Activated CD4-positive, alpha-beta T cell treated with anti-CD3 and anti-CD28 coated beads for 36 hours (primary cell): ENCODE measurements at regions of chr6 and their contacts with region 1.

Region 1: GRCh38 chr6:138115877-138116660 is 8.8 kb upstream of the PERP start:
- DNase-seq: peak; percentile 68
- ATAC-seq: peak; percentile 94
- H3K4me3 Mint-ChIP-seq: no peak overlapping the region
- H3K27ac Mint-ChIP-seq: no peak overlapping the region
- H3K4me1 Mint-ChIP-seq: peaks cover 6% of the 10 kb centered on the region
- H3K27me3 Mint-ChIP-seq: peaks cover 30% of the 10 kb centered on the region

Region 2: GRCh38 chr6:138001750-138002349 is 114.2 kb before region 1 on chr6:
- CTCF ChIA-PET with region 1: interaction called, 11 read pairs
- POLR2A ChIA-PET with region 1: no interaction called
- intact Hi-C with region 1: no loop called
- DNase-seq: peak; percentile 76
- ATAC-seq: peak; percentile 31
- H3K4me3 Mint-ChIP-seq: no peak overlapping the region
- H3K27ac Mint-ChIP-seq: no peak overlapping the region
- H3K4me1 Mint-ChIP-seq: peaks cover 20% of the 10 kb centered on the region
- H3K27me3 Mint-ChIP-seq: peaks cover 3% of the 10 kb centered on the region

Region 3: DNA sequence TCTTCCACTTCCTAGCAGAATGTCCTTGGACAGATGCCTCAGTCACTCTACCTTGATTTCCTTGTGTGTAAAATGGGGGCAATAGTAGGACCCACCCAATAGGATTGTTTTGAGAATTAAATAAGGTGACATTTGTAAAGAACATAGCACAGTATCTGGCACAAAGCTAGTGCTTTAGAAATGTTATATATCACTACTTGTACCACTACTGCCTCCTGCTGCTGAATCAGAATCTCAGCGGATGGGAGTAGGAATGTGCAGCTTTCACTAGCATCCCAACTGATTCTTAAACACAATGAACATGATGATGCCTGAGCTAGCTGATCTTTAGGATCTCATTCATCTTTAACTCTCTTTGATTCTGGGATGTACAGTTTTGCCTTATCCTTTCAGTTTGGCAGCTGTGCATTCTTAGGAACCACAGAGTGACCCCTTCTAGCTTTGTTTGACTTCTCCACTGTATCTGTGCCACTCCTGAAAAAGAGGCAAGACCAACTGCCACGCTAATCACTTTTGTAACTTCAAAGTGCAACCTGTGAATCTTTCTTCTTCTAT is 95.0 kb after region 1 on chr6:
- CTCF ChIA-PET with region 1: interaction called, 6 read pairs
- POLR2A ChIA-PET with region 1: no interaction called
- intact Hi-C with region 1: loop called in 1 of 2 experiments (anchors 5 kb)
- DNase-seq: no peak
- ATAC-seq: no peak
- H3K4me3 Mint-ChIP-seq: no peak overlapping the region
- H3K27ac Mint-ChIP-seq: no peak overlapping the region
- H3K4me1 Mint-ChIP-seq: no peaks in the 10 kb centered on the region
- H3K27me3 Mint-ChIP-seq: peaks cover 5% of the 10 kb centered on the region

Region 4: GRCh38 chr6:138403801-138404661 is 288.0 kb after region 1 on chr6 and contains the start of gene HEBP2:
- CTCF ChIA-PET with region 1: interaction called, 5 read pairs
- POLR2A ChIA-PET with region 1: no interaction called
- intact Hi-C with region 1: loop called (anchors 5 to 10 kb)
- DNase-seq: peak; percentile 91
- ATAC-seq: peak; percentile 88
- H3K4me3 Mint-ChIP-seq: peak within 1 kb of the TSS; percentile 70
- H3K27ac Mint-ChIP-seq: peak within 1 kb of the TSS; percentile 37
- H3K4me1 Mint-ChIP-seq: peaks cover 6% of the 10 kb centered on the region
- H3K27me3 Mint-ChIP-seq: no peaks in the 10 kb centered on the region
- total RNA-seq, gene HEBP2: 4.0 to 4.7 TPM

Region 5: DNA sequence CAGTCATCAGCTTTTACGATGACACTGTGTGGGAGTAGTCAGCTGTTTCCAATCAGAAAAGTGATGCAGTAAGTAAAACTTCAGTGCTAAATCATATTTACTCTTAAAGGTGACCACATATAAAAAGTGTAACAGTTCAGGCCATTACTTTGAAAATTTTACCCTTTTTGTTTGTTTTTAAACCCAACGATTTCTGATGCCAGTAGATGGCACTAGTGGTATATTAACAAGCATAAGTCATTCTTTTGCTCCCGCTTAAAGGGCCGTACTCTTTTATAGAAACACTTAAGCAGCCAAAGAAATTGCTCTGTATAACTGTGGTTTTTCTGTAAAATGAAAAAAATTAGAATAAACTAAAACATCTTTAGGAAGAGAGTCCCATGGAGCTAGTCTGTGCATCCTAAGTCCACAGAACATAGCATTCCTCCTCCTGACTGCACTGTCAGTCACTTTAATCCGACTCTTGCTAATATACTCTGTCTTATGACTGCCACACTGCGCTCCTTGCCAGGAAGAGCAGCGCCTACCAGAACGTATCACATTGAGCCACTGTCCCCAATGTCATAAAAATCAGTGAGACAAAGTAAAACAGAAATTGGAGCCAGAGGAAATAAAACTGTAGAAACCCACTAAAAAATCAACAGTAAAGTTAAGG is 313.0 kb after region 1 on chr6:
- CTCF ChIA-PET with region 1: interaction called, 5 read pairs
- POLR2A ChIA-PET with region 1: no interaction called
- intact Hi-C with region 1: loop called (anchors 1 to 5 kb)
- DNase-seq: no peak
- ATAC-seq: peak; percentile 39
- H3K4me3 Mint-ChIP-seq: no peak overlapping the region
- H3K27ac Mint-ChIP-seq: no peak overlapping the region
- H3K4me1 Mint-ChIP-seq: no peaks in the 10 kb centered on the region
- H3K27me3 Mint-ChIP-seq: no peaks in the 10 kb centered on the region

Region 6: GRCh38 chr6:138517635-138518034 is 401.6 kb after region 1 on chr6:
- CTCF ChIA-PET with region 1: interaction called, 12 read pairs
- POLR2A ChIA-PET with region 1: no interaction called
- intact Hi-C with region 1: loop called (anchors 1 to 2 kb)
- DNase-seq: peak; percentile 72
- ATAC-seq: peak; percentile 86
- H3K4me3 Mint-ChIP-seq: no peak overlapping the region
- H3K27ac Mint-ChIP-seq: no peak overlapping the region
- H3K4me1 Mint-ChIP-seq: peaks cover 9% of the 10 kb centered on the region
- H3K27me3 Mint-ChIP-seq: no peaks in the 10 kb centered on the region

Region 7: DNA sequence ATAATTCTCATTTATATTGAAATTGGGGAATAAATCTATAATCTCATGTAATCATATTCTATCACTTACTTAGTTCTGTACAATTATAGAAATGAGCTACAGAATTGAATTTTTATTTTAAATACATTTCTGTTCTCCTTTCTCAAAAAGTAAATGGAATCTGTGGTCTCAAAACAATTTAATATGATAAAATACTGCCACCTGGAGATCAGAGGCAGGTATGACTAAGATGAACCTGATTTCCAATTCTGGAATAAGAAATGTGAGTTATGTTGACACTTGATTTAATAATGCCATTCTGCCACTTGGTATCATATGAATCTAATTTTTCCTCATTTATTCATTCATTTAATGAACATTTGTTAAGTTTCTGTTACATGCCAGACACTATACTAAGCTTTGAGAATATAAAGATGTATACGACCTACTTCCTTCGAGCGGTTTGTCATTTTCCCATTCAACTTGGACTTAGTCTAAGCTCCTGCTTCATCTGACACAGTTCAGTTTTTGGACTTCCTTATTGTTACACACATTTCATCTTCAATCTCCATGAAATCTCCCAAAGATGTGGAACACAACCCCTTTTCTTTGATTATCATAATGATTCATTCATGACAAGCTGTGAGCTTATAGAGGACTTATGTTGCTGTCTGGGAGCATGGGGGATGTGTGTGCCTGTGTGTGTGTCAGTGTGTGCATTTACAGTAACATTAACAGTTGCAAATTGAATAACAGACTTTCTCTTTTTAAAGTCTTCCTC is 650.0 kb after region 1 on chr6:
- CTCF ChIA-PET with region 1: interaction called, 5 read pairs
- POLR2A ChIA-PET with region 1: no interaction called
- intact Hi-C with region 1: loop called (anchors 2 to 10 kb)
- DNase-seq: no peak
- ATAC-seq: no peak
- H3K4me3 Mint-ChIP-seq: no peak overlapping the region
- H3K27ac Mint-ChIP-seq: no peak overlapping the region
- H3K4me1 Mint-ChIP-seq: peaks cover 14% of the 10 kb centered on the region
- H3K27me3 Mint-ChIP-seq: no peaks in the 10 kb centered on the region